ENCODE measurements at regions of chr14 and their contacts with region 1.

Region 1: DNA sequence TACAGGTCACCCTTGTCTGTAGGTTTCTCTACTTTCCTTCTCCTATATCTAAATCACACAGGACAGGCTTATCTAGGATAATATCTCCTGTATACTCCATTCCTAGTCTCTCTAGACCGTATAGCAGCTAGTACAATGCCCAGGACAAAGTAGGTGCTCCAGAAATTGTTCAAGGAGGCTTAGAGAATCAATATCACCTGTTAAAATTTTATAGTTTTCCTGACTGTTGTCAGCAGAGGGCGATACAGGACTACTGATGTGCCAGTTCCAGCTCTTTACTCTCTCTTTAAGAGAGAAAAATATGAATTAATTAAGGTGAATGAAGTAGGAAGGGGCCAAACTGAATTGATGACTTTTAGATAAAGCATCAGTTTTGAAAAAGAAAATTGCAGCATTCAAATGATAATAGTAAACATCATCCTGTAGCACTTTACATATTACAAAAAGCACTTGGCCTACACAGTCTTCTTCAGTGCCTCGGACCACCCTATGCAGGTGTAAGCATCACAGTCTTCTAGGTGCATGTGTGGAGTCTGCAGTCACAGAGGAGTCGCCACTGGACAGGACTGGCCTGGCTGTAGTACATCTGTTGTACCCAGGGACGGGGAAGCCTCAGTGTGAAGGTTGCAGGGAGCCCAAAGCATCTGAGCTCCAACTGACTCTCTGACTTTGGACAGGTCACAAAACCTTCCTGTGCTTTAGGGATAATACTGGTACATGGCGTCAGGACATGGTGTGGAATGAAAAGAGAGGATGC is 61.9 kb upstream of the MAX start:
- DNase-seq: no peak
- ATAC-seq: no peak

Region 2: DNA sequence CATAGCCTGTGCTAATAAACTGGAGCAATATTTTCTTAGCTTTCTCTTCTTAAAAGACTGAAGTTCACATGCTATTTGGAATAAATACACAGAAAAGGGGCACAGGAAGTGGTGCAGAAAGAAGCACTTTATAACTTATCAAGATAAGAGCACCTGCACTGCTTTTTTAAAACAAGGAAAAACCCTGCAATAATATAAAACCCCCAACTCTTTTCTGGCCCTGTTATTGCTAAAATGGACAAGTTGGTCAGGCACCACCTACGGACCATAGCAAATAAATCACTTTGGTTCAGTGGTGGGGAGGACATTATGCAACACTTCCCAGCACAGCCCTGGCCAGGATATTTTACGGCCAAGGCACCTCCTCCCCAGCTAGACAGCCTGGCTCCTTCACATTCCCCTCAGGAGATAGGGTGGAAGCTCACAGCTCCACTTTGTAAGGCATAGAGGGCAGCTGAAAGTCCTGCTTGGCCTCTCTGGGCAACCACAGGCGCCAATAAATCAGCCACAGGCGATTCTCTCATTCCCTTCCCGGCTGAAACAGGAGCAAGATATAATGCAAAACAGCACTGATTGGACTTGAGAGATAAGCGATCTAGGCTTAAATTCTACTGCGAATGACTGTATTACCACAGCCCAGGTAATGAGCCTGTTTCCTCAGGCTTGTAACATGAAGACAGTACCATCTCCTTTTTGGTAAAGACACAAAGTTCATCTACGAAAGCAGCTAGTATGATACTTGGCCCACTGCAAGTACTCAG is 662.7 kb before region 1 on chr14:
- intact Hi-C with region 1: no loop called
- DNase-seq: no peak
- ATAC-seq: peak; percentile 21

Region 3: GRCh38 chr14:65373679-65374039 is 209.4 kb after region 1 on chr14:
- intact Hi-C with region 1: loop called (anchors 10 kb)
- DNase-seq: no peak
- ATAC-seq: no peak

Region 4: DNA sequence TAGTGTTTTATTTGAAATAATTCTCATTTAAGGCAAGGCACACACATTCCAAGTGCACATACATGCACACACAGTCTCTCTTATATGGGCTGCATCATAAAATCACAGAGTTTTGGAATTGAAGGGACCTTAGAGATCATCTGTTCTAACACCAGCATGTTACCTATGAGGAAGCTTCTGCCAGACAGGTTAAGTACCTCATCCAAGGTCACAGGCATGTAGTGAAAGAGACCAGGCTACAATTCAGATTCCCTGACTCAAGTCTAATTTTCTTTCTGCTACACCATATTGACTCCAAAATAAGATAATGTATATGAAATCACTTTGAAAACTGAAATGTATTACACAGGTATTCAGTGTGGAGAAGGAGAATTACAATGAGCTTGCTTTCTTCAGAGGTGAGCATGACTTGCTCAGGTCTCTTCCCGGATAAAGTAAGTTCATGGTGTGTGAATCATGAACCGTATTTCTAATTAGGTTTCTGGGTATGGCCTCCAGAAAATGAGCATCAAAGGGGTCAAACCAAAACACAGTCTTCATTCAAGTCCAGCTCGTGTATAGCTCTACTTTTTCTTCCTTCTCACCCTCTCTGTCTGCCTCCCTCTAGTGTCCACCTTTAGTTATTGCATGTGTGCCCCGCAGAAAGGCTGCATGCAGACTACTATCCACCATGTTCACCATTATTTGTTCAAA is 660.2 kb after region 1 on chr14:
- intact Hi-C with region 1: loop called (anchors 2 kb)
- DNase-seq: no peak
- ATAC-seq: peak; percentile 64

Region 5: GRCh38 chr14:65958664-65959562 is 794.7 kb after region 1 on chr14:
- intact Hi-C with region 1: loop called (anchors 5 kb)
- DNase-seq: no peak
- ATAC-seq: peak; percentile 62

Region 6: DNA sequence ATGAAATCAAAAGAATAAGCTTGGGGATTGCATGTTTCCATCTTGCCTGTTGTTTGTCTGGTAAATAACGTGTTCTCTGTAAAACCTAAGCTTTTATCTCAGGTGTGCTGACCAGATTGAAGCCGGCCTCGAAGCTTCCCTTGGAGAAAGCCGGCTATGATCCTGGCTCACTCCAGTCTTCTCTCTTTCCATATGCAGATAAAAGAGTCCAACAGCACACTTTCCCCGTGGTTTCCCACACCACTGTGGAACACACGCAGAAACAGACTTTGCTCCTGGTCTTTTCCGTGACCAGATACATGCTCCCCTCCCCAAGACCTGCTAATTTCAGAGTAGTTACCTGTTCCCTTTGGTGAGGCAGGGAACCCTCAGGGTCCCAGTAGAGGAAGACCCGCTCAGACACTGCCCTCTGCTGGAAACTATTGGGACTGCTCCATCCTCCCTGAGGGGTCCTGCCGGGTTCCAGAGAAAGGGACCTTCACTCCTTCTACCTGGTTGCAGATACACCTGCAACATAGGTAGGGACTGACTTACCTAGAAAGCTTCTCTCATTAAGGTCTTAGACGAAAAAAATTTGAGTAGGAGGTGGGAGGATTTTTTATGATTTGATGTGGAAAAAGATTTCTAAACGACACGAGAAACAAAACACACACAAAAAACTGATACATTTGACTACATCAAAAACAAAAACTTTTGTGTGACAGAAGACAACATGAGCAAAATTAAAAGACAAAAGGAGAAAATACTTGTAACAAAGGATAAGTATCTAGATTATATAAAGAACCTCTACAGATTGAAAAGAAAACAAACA is 906.5 kb after region 1 on chr14:
- intact Hi-C with region 1: loop called (anchors 5 kb)
- DNase-seq: no peak
- ATAC-seq: peak; percentile 52